ENCODE measurements at regions of chr3 and their contacts with region 1.

Region 1: GRCh38 chr3:119676771-119677640 is at the start of gene COX17:
- DNase-seq: peak; percentile 93
- H3K4me3 ChIP-seq: peak within 1 kb of the TSS; percentile 71 to 88 (median 75)
- H3K27ac ChIP-seq: peak within 1 kb of the TSS; percentile 62
- H3K4me1 ChIP-seq: peaks cover 15% of the 10 kb centered on the region
- H3K27me3 ChIP-seq: no peaks in the 10 kb centered on the region
- CTCF ChIP-seq: no peak
- POLR2A ChIP-seq: peak; percentile 21
- total RNA-seq, gene COX17: 31.3 and 37.6 TPM in 2 replicates

Region 2: DNA sequence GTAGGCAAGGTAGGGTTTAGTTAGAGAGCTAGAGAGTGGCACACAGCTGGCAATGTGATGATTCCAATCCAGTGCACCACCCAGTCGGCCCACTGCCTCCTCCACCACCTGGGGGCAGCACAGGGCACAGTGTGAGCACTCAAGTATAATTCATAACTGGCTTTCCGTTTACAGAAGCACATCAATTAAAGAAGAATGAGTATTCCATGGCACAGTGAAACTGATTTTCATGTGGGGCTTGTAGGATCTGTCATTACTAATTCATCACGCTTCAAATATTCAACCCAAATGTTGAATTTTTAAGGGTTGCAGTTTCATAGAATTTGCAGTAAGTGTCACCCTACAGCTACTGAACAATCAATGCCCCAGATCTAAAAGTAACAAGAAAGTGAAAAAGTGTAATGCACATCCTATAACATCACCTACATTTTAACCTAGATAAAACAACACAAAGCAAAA is 792.2 kb before region 1 on chr3:
- CTCF ChIA-PET with region 1: interaction called, 11 read pairs
- POLR2A ChIA-PET with region 1: no interaction called
- dilution Hi-C with region 1: no loop called
- intact Hi-C with region 1: no loop called
- DNase-seq: peak; percentile 52
- H3K4me3 ChIP-seq: no peak overlapping the region
- H3K27ac ChIP-seq: no peak overlapping the region
- H3K4me1 ChIP-seq: no peaks in the 10 kb centered on the region
- H3K27me3 ChIP-seq: no peaks in the 10 kb centered on the region
- CTCF ChIP-seq: peak; percentile 77 to 88
- POLR2A ChIP-seq: no peak

Region 3: GRCh38 chr3:119420196-119420595 is 256.8 kb before region 1 on chr3:
- CTCF ChIA-PET with region 1: interaction called, 24 read pairs
- POLR2A ChIA-PET with region 1: no interaction called
- dilution Hi-C with region 1: no loop called
- intact Hi-C with region 1: no loop called
- DNase-seq: peak; percentile 15
- H3K4me3 ChIP-seq: no peak overlapping the region
- H3K27ac ChIP-seq: no peak overlapping the region
- H3K4me1 ChIP-seq: no peaks in the 10 kb centered on the region
- H3K27me3 ChIP-seq: no peaks in the 10 kb centered on the region
- CTCF ChIP-seq: no peak
- POLR2A ChIP-seq: no peak

Region 4: DNA sequence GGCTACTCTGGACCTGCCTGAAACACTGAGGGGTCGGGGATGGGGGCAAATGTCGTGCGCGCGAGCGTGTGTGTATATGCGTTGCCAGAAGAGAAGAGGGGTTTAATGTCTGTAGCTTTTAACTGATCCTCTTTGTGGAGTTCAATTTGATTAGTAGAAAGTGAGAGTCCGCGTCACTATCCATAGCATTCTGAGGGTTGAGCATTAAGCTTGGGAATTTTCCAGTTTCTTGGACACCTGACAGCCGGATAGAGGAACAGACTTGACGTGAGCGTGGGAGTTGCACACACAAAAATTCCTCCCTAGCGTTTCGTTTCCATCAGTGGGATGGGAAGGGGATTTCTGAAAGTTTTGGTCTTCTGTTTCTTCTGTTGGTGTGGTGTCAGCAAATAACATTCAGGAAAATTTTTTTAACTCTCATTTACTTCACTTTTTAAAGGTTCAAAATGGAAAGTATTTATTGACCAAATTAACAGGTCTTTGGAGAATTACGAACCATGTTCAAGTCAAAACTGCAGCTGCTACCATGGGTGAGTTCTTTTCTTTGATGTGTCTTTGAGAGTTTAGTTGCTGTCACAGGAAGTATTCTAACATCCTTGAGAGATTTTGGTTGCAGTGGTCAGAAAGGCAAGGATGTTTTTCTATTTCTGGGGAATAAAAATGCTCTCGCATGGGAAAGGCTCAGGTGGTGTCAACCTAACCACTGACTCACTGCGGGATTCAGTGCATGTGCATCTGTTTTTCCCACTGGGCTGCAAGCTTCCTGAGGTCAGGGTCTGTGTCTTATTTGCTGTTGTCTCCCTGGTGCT is 207.4 kb before region 1 on chr3:
- CTCF ChIA-PET with region 1: interaction called, 16 read pairs
- POLR2A ChIA-PET with region 1: no interaction called
- dilution Hi-C with region 1: no loop called
- intact Hi-C with region 1: loop called (anchors 1 kb)
- DNase-seq: peak; percentile 62
- H3K4me3 ChIP-seq: peak overlapping the region; percentile 78 to 86 (median 80)
- H3K27ac ChIP-seq: peak overlapping the region; percentile 19
- H3K4me1 ChIP-seq: peaks cover 13% of the 10 kb centered on the region
- H3K27me3 ChIP-seq: no peaks in the 10 kb centered on the region
- CTCF ChIP-seq: no peak
- POLR2A ChIP-seq: no peak

Region 5: GRCh38 chr3:119524931-119525662 is 151.9 kb before region 1 on chr3:
- CTCF ChIA-PET with region 1: interaction called, 29 read pairs
- POLR2A ChIA-PET with region 1: no interaction called
- dilution Hi-C with region 1: no loop called
- intact Hi-C with region 1: loop called (anchors 1 kb)
- DNase-seq: peak; percentile 44
- H3K4me3 ChIP-seq: no peak overlapping the region
- H3K27ac ChIP-seq: no peak overlapping the region
- H3K4me1 ChIP-seq: no peaks in the 10 kb centered on the region
- H3K27me3 ChIP-seq: no peaks in the 10 kb centered on the region
- CTCF ChIP-seq: peak in 1 of 2 donors; percentile 18
- POLR2A ChIP-seq: no peak

Region 6: GRCh38 chr3:119600732-119601131 is 76.3 kb before region 1 on chr3:
- CTCF ChIA-PET with region 1: interaction called, 9 read pairs
- POLR2A ChIA-PET with region 1: interaction called, 4 read pairs
- dilution Hi-C with region 1: no loop called
- intact Hi-C with region 1: loop called (anchors 1 kb)
- DNase-seq: no peak
- H3K4me3 ChIP-seq: no peak overlapping the region
- H3K27ac ChIP-seq: no peak overlapping the region
- H3K4me1 ChIP-seq: peaks cover 20% of the 10 kb centered on the region
- H3K27me3 ChIP-seq: no peaks in the 10 kb centered on the region
- CTCF ChIP-seq: peak; percentile 9 to 47
- POLR2A ChIP-seq: no peak

Region 7: GRCh38 chr3:119690043-119690656 is 13.1 kb after region 1 on chr3:
- CTCF ChIA-PET with region 1: interaction called, 10 read pairs
- POLR2A ChIA-PET with region 1: no interaction called
- dilution Hi-C with region 1: no loop called
- intact Hi-C with region 1: no loop called
- DNase-seq: peak; percentile 52
- H3K4me3 ChIP-seq: no peak overlapping the region
- H3K27ac ChIP-seq: no peak overlapping the region
- H3K4me1 ChIP-seq: no peaks in the 10 kb centered on the region
- H3K27me3 ChIP-seq: no peaks in the 10 kb centered on the region
- CTCF ChIP-seq: peak; percentile 38 to 45
- POLR2A ChIP-seq: no peak

Region 8: GRCh38 chr3:119716998-119717397 is 40.0 kb after region 1 on chr3:
- CTCF ChIA-PET with region 1: no interaction called
- POLR2A ChIA-PET with region 1: no interaction called
- dilution Hi-C with region 1: no loop called
- intact Hi-C with region 1: no loop called
- DNase-seq: no peak
- H3K4me3 ChIP-seq: no peak overlapping the region
- H3K27ac ChIP-seq: no peak overlapping the region
- H3K4me1 ChIP-seq: no peaks in the 10 kb centered on the region
- H3K27me3 ChIP-seq: no peaks in the 10 kb centered on the region
- CTCF ChIP-seq: no peak
- POLR2A ChIP-seq: no peak